SK-N-SH (cell line): ENCODE measurements at regions of chr4 and their contacts with region 1.

Region 1: GRCh38 chr4:118865091-118865708 is 23.5 kb upstream of the SYNPO2 start:
- DNase-seq: peak; percentile 62
- H3K4me3 ChIP-seq: peak overlapping the region in 1 of 2 experiments; percentile 6; a peak in 1 of 4 replicates
- H3K27ac ChIP-seq: peak overlapping the region; percentile 1 to 71; a peak in 2 of 4 replicates
- H3K4me1 ChIP-seq: peaks cover 9 to 14% of the 10 kb centered on the region in 2 experiments; a peak in 3 of 4 replicates
- H3K27me3 ChIP-seq: no peaks in the 10 kb centered on the region
- CTCF ChIP-seq: peak; percentile 78
- EP300 ChIP-seq: no peak
- RAD21 ChIP-seq: peak; percentile 73

Region 2: DNA sequence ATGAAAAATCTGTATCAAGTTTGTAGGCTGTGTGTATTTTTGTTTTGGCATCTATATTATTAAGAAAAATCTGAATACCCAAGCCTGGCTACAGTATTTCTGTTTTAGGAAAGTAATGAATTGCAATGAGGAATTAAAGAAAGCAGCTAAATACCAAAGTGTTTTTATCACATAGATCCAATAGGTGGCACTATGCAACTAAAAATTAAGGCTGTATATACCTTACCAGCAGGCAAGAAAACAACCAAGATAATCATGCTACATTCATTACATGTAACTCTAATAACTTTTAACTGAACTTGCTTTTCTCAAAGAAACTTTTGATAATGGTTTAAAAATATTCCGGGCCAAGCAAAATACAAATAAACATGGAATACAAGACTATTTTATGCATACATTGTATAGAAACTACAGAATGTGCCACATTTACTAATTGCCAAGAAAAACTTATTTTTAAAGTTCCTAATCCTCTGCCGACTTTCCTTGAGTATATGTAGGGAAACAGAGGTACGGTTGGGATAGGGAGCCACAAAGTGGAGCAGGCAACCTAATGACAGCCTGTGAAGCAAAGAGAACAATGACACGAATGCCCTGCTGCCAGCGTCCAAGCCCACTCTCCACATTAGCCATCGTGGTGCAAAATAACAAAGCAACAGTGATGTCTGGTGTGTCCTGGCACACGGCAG is 93.0 kb before region 1 on chr4:
- CTCF ChIA-PET with region 1: interaction called, 16 read pairs
- POLR2A ChIA-PET with region 1: no interaction called
- DNase-seq: no peak
- H3K4me3 ChIP-seq: no peak overlapping the region; a peak in 1 of 4 replicates
- H3K27ac ChIP-seq: peak overlapping the region; percentile 69 to 99
- H3K4me1 ChIP-seq: peaks cover 54 to 63% of the 10 kb centered on the region in 2 experiments
- H3K27me3 ChIP-seq: no peaks in the 10 kb centered on the region
- CTCF ChIP-seq: peak; percentile 77
- EP300 ChIP-seq: no peak
- RAD21 ChIP-seq: peak; percentile 88

Region 3: GRCh38 chr4:118835571-118836300 is 29.5 kb before region 1 on chr4 and contains the start of gene SEC24D:
- CTCF ChIA-PET with region 1: interaction called, 28 read pairs
- POLR2A ChIA-PET with region 1: no interaction called
- DNase-seq: peak; percentile 99
- H3K4me3 ChIP-seq: peak within 1 kb of the TSS; percentile 84 to 96
- H3K27ac ChIP-seq: peak within 1 kb of the TSS; percentile 90 to 95
- H3K4me1 ChIP-seq: peaks cover 8 to 24% of the 10 kb centered on the region in 2 experiments; a peak in 3 of 4 replicates
- H3K27me3 ChIP-seq: no peaks in the 10 kb centered on the region
- CTCF ChIP-seq: 0 out of 2 replicates have a peak, but pooled peaks have one; percentile 6
- EP300 ChIP-seq: no peak
- RAD21 ChIP-seq: no peak
- polyA plus RNA-seq, gene SEC24D: 30.4 and 32.2 TPM in 2 replicates

Region 4: GRCh38 chr4:118845552-118846055 is 19.6 kb before region 1 on chr4:
- CTCF ChIA-PET with region 1: interaction called, 46 read pairs
- POLR2A ChIA-PET with region 1: no interaction called
- DNase-seq: no peak
- H3K4me3 ChIP-seq: no peak overlapping the region
- H3K27ac ChIP-seq: no peak overlapping the region
- H3K4me1 ChIP-seq: peaks cover 3 to 10% of the 10 kb centered on the region in 2 experiments; a peak in 2 of 4 replicates
- H3K27me3 ChIP-seq: no peaks in the 10 kb centered on the region
- CTCF ChIP-seq: no peak
- EP300 ChIP-seq: no peak
- RAD21 ChIP-seq: no peak

Region 5: DNA sequence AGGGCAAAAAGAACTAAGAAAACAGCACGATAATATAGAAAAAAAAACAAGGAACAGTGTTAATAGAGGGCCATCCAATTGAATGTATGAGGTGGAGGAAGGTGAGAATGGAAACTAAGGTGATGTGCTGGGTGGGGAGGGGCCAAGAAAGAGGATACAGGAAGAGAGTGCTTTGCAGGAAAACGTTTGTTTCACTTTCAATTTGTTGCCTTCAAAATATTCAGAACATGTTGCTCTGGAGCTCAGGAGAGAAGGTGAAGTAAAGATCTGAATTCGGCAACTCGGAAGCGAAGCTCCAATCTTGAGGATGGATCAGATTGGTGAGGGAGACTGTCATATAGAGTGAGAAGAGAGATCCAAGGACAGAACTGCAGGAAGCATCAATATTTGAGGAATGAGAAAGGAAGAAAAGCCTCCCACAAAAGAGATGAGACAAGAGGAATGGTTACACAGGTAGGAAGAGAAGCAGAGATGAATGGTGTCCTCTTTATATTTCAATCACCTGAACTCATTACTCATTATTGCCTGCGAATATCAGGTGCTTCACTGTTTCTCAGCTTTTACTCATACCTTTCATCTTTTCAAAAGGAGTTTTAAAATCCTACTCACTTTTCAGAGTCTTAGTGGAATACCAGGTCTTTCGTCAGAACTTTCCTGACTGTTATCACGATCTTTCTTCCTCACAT is 14.6 kb before region 1 on chr4:
- CTCF ChIA-PET with region 1: interaction called, 46 read pairs
- POLR2A ChIA-PET with region 1: interaction called, 3 read pairs
- DNase-seq: no peak
- H3K4me3 ChIP-seq: peak overlapping the region; percentile 9 to 24; a peak in 2 of 4 replicates
- H3K27ac ChIP-seq: no peak overlapping the region
- H3K4me1 ChIP-seq: 0 out of 4 replicates have a peak, but pooled peaks cover 0 to 3% of the 10 kb centered on the region in 2 experiments
- H3K27me3 ChIP-seq: no peaks in the 10 kb centered on the region
- CTCF ChIP-seq: no peak
- EP300 ChIP-seq: no peak
- RAD21 ChIP-seq: no peak

Region 6: GRCh38 chr4:118879409-118879808 is 14.2 kb after region 1 on chr4:
- CTCF ChIA-PET with region 1: interaction called, 16 read pairs
- POLR2A ChIA-PET with region 1: no interaction called
- DNase-seq: no peak
- H3K4me3 ChIP-seq: no peak overlapping the region
- H3K27ac ChIP-seq: no peak overlapping the region
- H3K4me1 ChIP-seq: peaks cover 0 to 3% of the 10 kb centered on the region in 2 experiments; a peak in 2 of 4 replicates
- H3K27me3 ChIP-seq: no peaks in the 10 kb centered on the region
- CTCF ChIP-seq: no peak
- EP300 ChIP-seq: no peak
- RAD21 ChIP-seq: no peak

Region 7: DNA sequence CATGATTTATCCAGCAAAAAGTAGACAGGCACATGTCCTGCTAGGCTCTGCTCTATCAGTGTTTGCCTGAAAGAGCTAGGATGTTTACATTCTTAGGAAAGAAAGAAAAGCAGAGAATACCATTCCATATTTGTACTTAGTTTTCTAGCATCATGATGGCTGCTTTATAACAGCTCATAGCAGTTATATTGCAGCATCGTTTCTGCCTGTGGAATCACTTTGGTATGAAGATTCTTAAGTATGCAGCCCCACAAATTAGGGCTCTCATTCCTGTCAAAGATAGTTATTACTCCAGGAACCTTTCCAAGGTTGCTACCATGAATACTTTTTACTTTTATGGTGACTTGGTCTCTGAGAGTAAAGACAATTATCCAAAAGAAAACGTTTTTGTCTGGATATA is 151.4 kb after region 1 on chr4:
- CTCF ChIA-PET with region 1: no interaction called
- POLR2A ChIA-PET with region 1: no interaction called
- DNase-seq: no peak
- H3K4me3 ChIP-seq: no peak overlapping the region
- H3K27ac ChIP-seq: peak overlapping the region in 1 of 2 experiments; percentile 17; a peak in 2 of 4 replicates
- H3K4me1 ChIP-seq: no peaks in the 10 kb centered on the region; a peak in 1 of 4 replicates
- H3K27me3 ChIP-seq: no peaks in the 10 kb centered on the region
- CTCF ChIP-seq: no peak
- EP300 ChIP-seq: no peak
- RAD21 ChIP-seq: no peak